Left ventricle myocardium inferior (tissue), 1 donor: ENCODE measurements at regions of chr16 and their contacts with region 1.

Region 1: GRCh38 chr16:23072084-23072599 is 77.1 kb downstream of the USP31 start:
- DNase-seq: peak; percentile 91
- H3K4me3 ChIP-seq: peak overlapping the region; percentile 42
- H3K27ac ChIP-seq: peak overlapping the region; percentile 92
- H3K4me1 ChIP-seq: peaks cover 62% of the 10 kb centered on the region
- H3K27me3 ChIP-seq: no peaks in the 10 kb centered on the region
- CTCF ChIP-seq: no peak

Region 2: GRCh38 chr16:22813223-22813945 is 258.8 kb before region 1 on chr16:
- intact Hi-C with region 1: no loop called
- DNase-seq: peak; percentile 42
- H3K4me3 ChIP-seq: peak overlapping the region; percentile 61
- H3K27ac ChIP-seq: no peak overlapping the region
- H3K4me1 ChIP-seq: peaks cover 18% of the 10 kb centered on the region
- H3K27me3 ChIP-seq: peaks cover 83% of the 10 kb centered on the region
- CTCF ChIP-seq: peak; percentile 67

Region 3: DNA sequence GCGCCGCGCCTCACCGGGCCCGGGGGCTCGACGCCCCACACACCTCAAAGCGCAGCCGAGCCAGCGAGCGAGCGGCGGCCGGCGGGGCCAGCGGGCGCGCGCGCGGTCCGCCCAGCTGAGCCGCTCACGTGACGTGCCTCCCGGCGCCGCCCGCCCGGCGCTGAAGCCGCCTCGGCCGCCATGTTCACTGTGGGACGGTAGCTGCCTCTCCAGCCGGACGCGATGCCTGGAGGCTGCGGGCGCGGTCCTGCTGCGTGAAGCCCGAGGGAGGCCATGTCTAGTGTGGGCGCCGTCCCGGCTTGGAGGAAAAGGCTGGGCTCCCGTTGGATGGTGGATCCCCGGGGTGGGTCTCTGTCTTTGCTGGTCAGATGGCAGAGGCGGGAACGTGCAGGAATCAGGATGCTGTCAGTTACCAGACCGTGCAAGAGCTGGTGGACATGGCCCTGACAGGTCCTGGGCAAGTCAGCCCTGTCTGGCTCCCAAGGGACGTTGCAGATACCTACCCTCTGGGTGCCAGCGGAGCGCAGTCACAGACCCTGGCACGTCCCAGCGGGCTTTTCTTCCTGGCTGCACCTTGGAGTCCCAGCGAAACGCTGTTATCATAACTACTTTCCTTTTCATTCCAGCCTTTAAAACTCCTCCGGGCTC is 77.3 kb after region 1 on chr16 and contains the start of gene USP31:
- intact Hi-C with region 1: loop called (anchors 10 kb)
- DNase-seq: peak; percentile 96
- H3K4me3 ChIP-seq: peak within 1 kb of the TSS; percentile 78
- H3K27ac ChIP-seq: peak within 1 kb of the TSS; percentile 97
- H3K4me1 ChIP-seq: peaks cover 42% of the 10 kb centered on the region
- H3K27me3 ChIP-seq: no peaks in the 10 kb centered on the region
- CTCF ChIP-seq: no peak
- total RNA-seq, gene USP31: 28.2 TPM